ENCODE measurements at regions of chr2 and their contacts with region 1.

Region 1: GRCh38 chr2:169933124-169933711 is 106.0 kb downstream of the UBR3 start:
- DNase-seq: peak; percentile 12
- H3K4me3 ChIP-seq: no peak overlapping the region
- H3K27ac ChIP-seq: no peak overlapping the region
- H3K4me1 ChIP-seq: no peaks in the 10 kb centered on the region
- H3K27me3 ChIP-seq: no peaks in the 10 kb centered on the region
- CTCF ChIP-seq: peak; percentile 61 to 76

Region 2: GRCh38 chr2:168784993-168785392 is 1148.2 kb before region 1 on chr2:
- CTCF ChIA-PET with region 1: no interaction called
- dilution Hi-C with region 1: no loop called
- in situ Hi-C with region 1: no loop called
- intact Hi-C with region 1: no loop called
- DNase-seq: no peak
- H3K4me3 ChIP-seq: no peak overlapping the region
- H3K27ac ChIP-seq: no peak overlapping the region
- H3K4me1 ChIP-seq: no peaks in the 10 kb centered on the region
- H3K27me3 ChIP-seq: no peaks in the 10 kb centered on the region
- CTCF ChIP-seq: no peak

Region 3: GRCh38 chr2:169452080-169452479 is 481.1 kb before region 1 on chr2:
- CTCF ChIA-PET with region 1: interaction called, 20 read pairs
- dilution Hi-C with region 1: no loop called
- in situ Hi-C with region 1: no loop called
- intact Hi-C with region 1: no loop called
- DNase-seq: peak; percentile 5
- H3K4me3 ChIP-seq: no peak overlapping the region
- H3K27ac ChIP-seq: no peak overlapping the region
- H3K4me1 ChIP-seq: no peaks in the 10 kb centered on the region
- H3K27me3 ChIP-seq: no peaks in the 10 kb centered on the region
- CTCF ChIP-seq: peak; percentile 32 to 52

Region 4: DNA sequence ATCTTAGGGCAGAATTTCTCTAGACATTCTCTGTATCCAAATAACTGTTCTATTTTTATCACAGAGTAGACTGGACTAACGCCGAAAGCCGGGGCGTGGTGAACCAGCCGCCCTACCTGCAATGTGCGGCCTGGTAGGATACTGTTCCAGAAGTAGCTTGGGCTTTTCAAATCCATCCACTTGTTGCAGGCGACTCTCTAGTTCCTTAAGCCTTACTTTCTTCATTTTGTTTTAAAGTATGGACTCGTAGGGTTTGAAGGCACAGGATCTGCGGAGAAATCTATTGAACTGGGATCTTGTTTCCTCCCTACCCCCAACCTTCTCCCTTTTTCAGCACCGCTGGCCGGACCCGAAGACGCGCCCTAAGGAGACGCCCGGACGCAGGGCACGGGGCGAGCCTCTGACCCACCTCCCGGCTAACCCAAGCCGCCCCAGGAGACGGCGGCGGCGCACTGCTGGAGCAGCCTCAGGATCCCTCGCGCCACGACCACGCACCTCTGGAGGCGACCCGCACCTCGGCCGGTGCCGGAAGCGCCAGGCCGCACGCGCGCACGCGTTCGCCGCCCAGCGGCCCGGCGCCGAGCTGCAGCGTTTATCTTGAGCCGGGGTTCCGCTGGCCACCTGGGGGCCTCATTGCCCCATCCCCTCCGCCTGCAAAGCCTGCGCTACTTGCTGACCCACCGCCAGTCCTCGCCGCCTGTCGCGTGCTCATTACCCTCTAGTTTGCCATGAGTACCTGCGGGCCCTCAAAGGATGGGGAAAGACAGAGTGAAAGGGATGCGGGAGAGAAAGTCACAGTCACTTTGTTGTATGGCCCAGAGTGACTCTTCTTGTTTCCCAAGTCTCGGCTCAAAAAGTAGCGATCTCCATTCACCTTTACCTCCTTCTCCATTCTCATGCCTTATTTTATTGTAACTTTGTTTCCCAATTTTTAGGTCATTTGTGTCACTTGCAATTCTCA is 108.6 kb before region 1 on chr2 and contains the start of gene METTL5:
- CTCF ChIA-PET with region 1: interaction called, 3 read pairs
- dilution Hi-C with region 1: no loop called
- in situ Hi-C with region 1: no loop called
- intact Hi-C with region 1: loop called (anchors 1 kb)
- DNase-seq: peak; percentile 73
- H3K4me3 ChIP-seq: peak within 1 kb of the TSS; percentile 76 to 90 (median 78)
- H3K27ac ChIP-seq: peak within 1 kb of the TSS; percentile 76
- H3K4me1 ChIP-seq: peaks cover 21% of the 10 kb centered on the region
- H3K27me3 ChIP-seq: no peaks in the 10 kb centered on the region
- CTCF ChIP-seq: peak; percentile 78 to 82
- total RNA-seq, gene METTL5: 60.2 to 90.6 TPM

Region 5: DNA sequence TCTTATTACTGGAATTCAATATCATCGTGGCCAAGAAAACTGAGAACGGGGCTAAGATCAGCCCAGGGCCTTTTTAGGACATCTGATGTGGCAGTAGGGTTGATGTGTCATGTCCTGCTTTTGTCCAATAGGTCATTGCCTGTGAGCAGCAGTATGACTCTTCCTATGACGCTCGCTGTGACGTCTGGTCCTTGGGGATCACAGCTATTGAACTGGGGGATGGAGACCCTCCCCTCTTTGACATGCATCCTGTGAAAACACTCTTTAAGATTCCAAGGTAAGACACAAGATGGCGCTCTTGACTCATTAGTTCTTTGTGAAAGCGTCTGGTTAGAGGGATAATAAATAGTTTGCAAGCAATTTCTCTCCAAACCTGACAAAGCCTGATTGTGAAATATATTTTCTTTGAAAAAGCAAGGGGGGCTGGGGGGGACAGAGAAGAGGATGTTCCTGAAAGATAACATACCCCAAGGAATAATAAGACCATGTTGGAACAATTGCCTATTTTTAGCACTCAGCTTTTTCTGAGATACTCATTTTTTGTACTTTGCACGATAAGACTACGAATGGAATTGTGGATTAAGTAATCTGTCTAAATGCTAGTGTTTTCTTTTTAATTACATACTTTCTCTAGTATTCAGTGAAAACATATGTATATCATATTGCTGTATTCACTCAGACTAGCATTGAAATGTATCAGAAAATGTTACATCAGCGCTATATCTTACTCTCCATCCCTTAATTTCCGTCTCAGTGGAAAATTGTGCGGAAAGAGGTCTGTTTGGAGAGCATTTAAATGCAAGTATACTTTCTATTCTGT is 302.9 kb after region 1 on chr2:
- CTCF ChIA-PET with region 1: interaction called, 3 read pairs
- dilution Hi-C with region 1: no loop called
- in situ Hi-C with region 1: no loop called
- intact Hi-C with region 1: loop called (anchors 1 kb)
- DNase-seq: peak; percentile 50
- H3K4me3 ChIP-seq: no peak overlapping the region
- H3K27ac ChIP-seq: no peak overlapping the region
- H3K4me1 ChIP-seq: no peaks in the 10 kb centered on the region
- H3K27me3 ChIP-seq: peaks cover 5% of the 10 kb centered on the region
- CTCF ChIP-seq: peak; percentile 62 to 66

Region 6: DNA sequence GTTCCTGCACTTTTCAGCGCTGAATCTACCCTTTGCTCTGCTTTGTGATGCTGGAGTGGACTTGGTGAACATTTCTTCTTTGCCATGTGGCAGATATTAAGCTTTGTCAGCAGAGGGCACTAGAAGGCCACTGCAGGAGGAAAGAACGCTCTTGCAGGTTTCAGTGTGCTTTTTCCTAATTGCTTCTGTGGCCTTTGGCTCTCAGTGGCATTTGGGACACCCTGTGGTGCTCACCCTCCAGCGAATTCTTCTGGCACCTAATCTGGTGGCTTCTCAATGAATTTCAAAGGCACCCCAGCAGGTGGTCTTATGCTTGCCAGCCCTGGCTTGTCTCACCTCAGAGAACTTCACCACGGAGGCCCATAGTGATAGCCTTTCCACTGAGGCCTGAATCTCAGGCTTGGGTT is 391.4 kb after region 1 on chr2:
- CTCF ChIA-PET with region 1: no interaction called
- dilution Hi-C with region 1: no loop called
- in situ Hi-C with region 1: no loop called
- intact Hi-C with region 1: loop called (anchors 2 kb)
- DNase-seq: peak; percentile 39
- H3K4me3 ChIP-seq: no peak overlapping the region
- H3K27ac ChIP-seq: no peak overlapping the region
- H3K4me1 ChIP-seq: no peaks in the 10 kb centered on the region
- H3K27me3 ChIP-seq: no peaks in the 10 kb centered on the region
- CTCF ChIP-seq: peak; percentile 80 to 91

Region 7: GRCh38 chr2:170361090-170361936 is 428.1 kb after region 1 on chr2:
- CTCF ChIA-PET with region 1: no interaction called
- dilution Hi-C with region 1: no loop called
- in situ Hi-C with region 1: no loop called
- intact Hi-C with region 1: loop called (anchors 1 kb)
- DNase-seq: peak; percentile 50
- H3K4me3 ChIP-seq: no peak overlapping the region
- H3K27ac ChIP-seq: no peak overlapping the region
- H3K4me1 ChIP-seq: no peaks in the 10 kb centered on the region
- H3K27me3 ChIP-seq: no peaks in the 10 kb centered on the region
- CTCF ChIP-seq: peak; percentile 79 to 87

Measured in mammary epithelial cell (primary cell).